ENCODE measurements at regions of chr5 and their contacts with region 1.

Region 1: DNA sequence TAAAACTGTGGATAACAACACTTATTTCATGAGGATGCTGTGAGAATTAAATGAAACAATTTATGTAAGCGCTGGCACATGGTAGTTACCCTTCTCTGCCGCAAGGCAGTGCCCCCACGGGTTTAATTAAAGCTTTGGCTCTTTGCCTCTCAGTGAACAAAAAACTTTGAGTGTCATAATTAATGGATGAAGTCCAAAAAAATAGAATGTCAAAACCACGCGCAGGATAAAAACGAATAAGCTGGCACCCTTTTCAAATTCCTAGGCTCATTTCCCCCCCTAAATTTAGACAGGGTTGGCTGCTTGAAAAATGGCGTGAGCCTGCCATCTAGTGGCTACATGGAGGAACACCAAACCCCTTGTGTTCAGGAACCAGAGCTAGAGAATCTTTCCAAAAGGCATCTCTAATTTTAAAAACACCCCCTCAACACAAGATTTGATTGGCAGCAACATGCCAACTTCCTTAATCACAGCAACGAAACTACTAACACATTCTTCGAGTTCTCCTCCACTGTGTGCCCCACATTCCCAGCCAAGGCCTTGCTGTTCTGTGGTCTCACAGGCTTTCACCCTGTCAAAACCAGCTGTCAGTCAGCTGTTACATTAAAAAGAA is 29.0 kb upstream of the CCNG1 start:
- DNase-seq: peak; percentile 77 to 87 (median 84)
- H3K4me3 ChIP-seq: peak overlapping the region in 3 of 7 experiments; percentile 11 to 54 (median 23)
- H3K27ac ChIP-seq: no peak overlapping the region
- H3K4me1 ChIP-seq: peaks cover 12 to 23% (median 19%) of the 10 kb centered on the region in 4 experiments
- H3K27me3 ChIP-seq: no peaks in the 10 kb centered on the region

Region 2: GRCh38 chr5:163306421-163306820 is 102.0 kb before region 1 on chr5:
- CTCF ChIA-PET with region 1: interaction called, 14 read pairs
- POLR2A ChIA-PET with region 1: no interaction called
- DNase-seq: peak; percentile 29 to 55 (median 51)
- H3K4me3 ChIP-seq: no peak overlapping the region
- H3K27ac ChIP-seq: no peak overlapping the region
- H3K4me1 ChIP-seq: no peaks in the 10 kb centered on the region
- H3K27me3 ChIP-seq: no peaks in the 10 kb centered on the region

Region 3: DNA sequence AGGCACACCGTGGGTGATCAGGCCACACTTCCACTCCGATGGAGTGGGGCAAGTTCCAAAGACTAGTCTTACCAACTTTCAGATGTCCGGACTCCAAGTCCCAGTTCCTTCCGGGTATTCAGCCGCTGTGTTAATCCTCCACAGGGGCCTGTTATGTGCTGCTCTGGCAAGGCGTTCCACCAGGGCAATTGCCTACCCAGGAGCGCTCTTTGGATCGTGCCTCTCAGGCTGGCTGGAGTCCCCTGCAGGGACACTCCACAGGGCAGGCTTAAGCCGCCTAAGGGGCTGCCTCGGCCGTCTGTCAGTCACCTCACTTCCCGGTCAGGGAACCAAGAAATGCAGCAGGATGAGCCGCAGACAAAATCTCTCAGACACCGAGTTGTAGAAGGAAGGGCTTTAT is 89.7 kb before region 1 on chr5:
- CTCF ChIA-PET with region 1: no interaction called
- POLR2A ChIA-PET with region 1: no interaction called
- DNase-seq: no peak
- H3K4me3 ChIP-seq: no peak overlapping the region
- H3K27ac ChIP-seq: no peak overlapping the region
- H3K4me1 ChIP-seq: no peaks in the 10 kb centered on the region
- H3K27me3 ChIP-seq: no peaks in the 10 kb centered on the region

Region 4: DNA sequence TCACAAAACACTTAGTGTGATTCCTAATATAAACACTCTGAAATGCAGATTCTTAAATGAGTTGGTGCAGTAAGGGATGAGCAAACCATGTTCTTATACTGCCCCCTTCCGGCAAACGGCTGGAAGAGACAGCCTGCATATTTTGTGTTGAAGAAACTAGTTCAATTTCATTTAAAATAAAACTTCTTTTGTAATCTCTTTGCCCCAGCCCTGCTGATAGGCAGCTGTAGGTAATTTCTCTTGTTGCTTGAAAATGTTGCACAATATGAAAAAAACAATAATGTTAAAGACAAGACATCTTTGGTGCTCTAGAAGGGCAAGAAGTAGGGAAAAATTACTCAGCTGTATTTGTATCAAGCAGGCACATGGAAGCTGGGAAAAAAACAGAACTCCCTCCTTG is 60.7 kb before region 1 on chr5:
- CTCF ChIA-PET with region 1: interaction called, 26 read pairs
- POLR2A ChIA-PET with region 1: no interaction called
- DNase-seq: peak; percentile 63 to 81 (median 78)
- H3K4me3 ChIP-seq: no peak overlapping the region
- H3K27ac ChIP-seq: no peak overlapping the region
- H3K4me1 ChIP-seq: peaks cover 0 to 4% (median 0%) of the 10 kb centered on the region in 4 experiments
- H3K27me3 ChIP-seq: peaks cover 0 to 2% (median 0%) of the 10 kb centered on the region in 5 experiments

Region 5: DNA sequence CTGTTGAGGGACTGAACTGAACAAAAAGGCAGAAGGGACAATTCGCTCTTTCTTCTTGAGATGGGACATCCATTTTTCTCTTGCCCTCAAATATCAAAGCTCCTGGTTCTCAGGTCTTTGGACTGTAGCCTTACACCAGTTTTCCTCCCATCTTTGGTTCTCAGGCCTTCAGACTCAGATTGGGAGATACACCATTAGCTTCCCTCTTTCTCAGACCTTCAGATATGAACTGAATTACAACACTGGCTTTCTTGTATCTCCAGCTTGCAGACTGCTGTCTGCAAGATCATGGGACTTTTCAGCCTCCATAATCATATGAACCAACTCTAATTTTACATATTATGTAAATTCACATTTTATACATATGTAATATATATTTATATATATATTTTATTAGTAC is 16.4 kb after region 1 on chr5:
- CTCF ChIA-PET with region 1: interaction called, 13 read pairs
- POLR2A ChIA-PET with region 1: no interaction called
- DNase-seq: peak in 1 of 3 donors; percentile 41
- H3K4me3 ChIP-seq: no peak overlapping the region
- H3K27ac ChIP-seq: no peak overlapping the region
- H3K4me1 ChIP-seq: peaks cover 0 to 16% (median 6%) of the 10 kb centered on the region in 4 experiments
- H3K27me3 ChIP-seq: no peaks in the 10 kb centered on the region

Region 6: DNA sequence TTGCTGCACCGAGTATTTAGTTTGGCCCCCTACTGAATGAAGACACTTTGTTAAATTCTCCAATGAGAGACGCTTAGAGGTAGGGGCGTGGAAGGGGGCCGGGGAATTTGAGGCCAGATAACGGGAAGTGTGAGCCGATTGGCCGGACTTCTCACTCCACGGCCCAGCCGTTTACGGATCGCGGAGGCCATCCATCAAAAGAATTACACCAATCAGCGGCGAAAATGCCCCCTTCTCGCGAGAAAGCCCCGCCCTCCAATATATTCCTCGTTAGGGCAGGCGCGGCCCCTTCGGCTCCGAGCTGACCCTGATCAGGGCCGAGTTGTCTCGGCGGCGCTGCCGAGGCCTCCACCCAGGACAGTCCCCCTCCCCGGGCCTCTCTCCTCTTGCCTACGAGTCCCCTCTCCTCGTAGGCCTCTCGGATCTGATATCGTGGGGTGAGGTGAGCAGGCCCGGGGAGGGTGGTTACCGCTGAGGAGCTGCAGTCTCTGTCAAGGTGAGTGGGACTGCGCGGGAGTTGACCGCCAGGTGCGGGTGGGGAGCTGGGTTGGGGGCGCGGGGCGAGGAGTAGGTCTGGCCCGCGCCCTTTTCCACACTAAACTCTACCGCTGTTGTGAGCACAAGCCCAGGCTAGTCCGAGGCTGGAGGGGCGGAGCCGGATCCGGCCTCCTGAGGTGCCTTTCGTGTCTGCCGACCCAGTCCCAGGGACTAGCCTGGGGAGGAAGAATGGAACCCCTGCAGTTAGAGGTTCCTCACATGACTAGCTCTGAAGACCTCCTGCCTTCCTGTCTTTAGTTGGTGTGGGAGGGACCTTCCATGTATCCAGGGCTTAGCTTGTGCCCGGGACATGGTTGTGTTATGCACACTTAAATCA is 29.1 kb after region 1 on chr5 and contains the start of gene CCNG1:
- CTCF ChIA-PET with region 1: interaction called, 16 read pairs
- POLR2A ChIA-PET with region 1: interaction called, 5 read pairs
- DNase-seq: peak; percentile 97
- H3K4me3 ChIP-seq: peak within 1 kb of the TSS; percentile 90 to 98 (median 95)
- H3K27ac ChIP-seq: peak within 1 kb of the TSS; percentile 87 to 95
- H3K4me1 ChIP-seq: peaks cover 7 to 43% (median 36%) of the 10 kb centered on the region in 4 experiments
- H3K27me3 ChIP-seq: no peaks in the 10 kb centered on the region